ENCODE measurements at regions of chr7 and their contacts with region 1.

Region 1: DNA sequence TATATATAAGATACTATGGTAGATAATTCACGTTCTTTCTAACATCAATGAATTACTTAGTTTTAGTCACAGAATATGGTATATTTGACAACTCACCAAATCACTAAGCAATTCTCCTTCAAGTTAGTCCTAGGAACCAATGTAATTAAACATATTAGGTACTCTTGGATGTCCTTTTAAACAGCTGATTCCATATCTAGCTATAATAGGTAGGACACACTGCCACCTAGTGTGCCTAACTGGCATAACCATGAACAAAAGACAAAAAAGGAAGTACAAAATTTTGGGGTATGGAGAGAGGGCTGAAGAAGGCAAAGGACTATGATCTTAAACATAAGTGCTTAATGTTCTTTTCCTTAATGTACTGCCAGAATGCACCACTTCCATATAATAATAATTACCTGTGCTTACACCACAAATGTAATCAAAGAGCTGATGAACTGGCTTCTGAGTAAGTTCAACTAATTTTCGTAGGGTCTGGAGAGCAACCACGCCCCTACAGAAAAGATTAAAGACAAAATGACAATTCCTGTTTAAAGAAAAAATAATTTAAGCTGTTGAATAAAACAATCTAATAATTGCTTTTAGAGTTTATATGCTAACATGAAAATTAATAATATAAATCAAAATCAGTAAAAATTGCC is 28.7 kb downstream of the PNPLA8 start:
- DNase-seq: peak; percentile 59
- H3K4me3 Mint-ChIP-seq: no peak overlapping the region
- H3K27ac Mint-ChIP-seq: no peak overlapping the region
- H3K4me1 Mint-ChIP-seq: no peaks in the 10 kb centered on the region
- H3K27me3 Mint-ChIP-seq: no peaks in the 10 kb centered on the region

Region 2: GRCh38 chr7:108114117-108114841 is 382.9 kb before region 1 on chr7:
- CTCF ChIA-PET with region 1: interaction called, 4 read pairs
- intact Hi-C with region 1: loop called (anchors 5 kb)
- DNase-seq: peak; percentile 27
- H3K4me3 Mint-ChIP-seq: no peak overlapping the region
- H3K27ac Mint-ChIP-seq: no peak overlapping the region
- H3K4me1 Mint-ChIP-seq: no peaks in the 10 kb centered on the region
- H3K27me3 Mint-ChIP-seq: peaks cover 3% of the 10 kb centered on the region

Region 3: GRCh38 chr7:108181073-108181985 is 315.9 kb before region 1 on chr7:
- CTCF ChIA-PET with region 1: interaction called, 22 read pairs
- intact Hi-C with region 1: loop called (anchors 1 kb)
- DNase-seq: no peak
- H3K4me3 Mint-ChIP-seq: no peak overlapping the region
- H3K27ac Mint-ChIP-seq: no peak overlapping the region
- H3K4me1 Mint-ChIP-seq: no peaks in the 10 kb centered on the region
- H3K27me3 Mint-ChIP-seq: no peaks in the 10 kb centered on the region

Region 4: DNA sequence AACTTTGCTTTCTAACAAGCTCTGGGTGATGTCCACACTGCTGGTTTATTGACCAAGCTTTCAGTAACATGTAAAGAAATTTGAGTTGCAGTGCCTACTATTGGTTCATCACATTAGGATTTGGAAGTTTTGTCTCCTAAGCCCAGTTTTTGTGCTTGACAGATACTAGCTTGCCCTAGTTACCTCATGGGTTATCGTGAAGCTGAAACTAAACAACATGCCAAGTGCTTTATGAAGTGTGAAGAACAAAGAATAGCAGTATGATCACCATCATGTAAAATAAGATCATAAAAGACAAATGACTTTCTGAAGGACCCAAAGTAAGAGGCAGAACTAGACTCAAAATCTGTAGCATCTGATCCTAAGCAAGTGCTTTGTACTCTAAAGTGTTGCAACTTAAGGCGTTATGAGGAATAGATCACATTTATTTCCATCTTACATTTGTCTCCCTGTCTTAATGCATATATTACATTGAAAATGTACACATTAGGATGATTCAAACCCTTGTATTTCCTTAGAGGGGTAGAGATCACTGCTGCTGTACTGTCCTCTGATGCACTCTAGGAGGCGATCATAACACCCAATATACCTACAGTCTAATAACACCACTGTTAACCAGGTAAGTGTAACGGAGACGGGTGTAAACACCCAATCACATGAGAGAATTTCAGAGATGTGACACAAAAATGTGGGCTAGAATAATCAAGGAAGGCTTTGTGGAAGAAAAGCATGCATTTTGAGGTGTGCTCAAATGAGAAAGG is 112.3 kb before region 1 on chr7:
- CTCF ChIA-PET with region 1: interaction called, 3 read pairs
- intact Hi-C with region 1: loop called (anchors 1 kb)
- DNase-seq: no peak
- H3K4me3 Mint-ChIP-seq: no peak overlapping the region
- H3K27ac Mint-ChIP-seq: no peak overlapping the region
- H3K4me1 Mint-ChIP-seq: peaks cover 3% of the 10 kb centered on the region
- H3K27me3 Mint-ChIP-seq: no peaks in the 10 kb centered on the region

Region 5: DNA sequence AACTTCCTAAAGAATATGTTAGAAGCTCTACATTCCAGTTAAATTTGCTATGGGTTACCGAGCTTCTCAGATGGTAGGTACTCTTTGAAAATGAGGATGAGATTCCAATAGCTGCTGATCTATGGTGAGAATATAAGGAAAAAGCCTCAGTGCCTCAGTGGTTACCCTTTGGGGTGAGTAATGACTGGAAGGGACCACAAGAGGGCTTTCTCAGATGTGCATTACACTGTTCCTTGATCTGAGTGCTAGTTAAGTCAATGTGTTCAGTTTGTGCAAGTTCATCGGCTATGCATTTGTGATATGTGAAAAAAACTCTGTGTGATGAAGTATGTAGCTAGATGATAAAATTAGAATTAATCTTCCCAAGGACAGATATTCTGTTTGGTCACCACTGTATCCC is 44.5 kb before region 1 on chr7:
- CTCF ChIA-PET with region 1: interaction called, 18 read pairs
- intact Hi-C with region 1: loop called (anchors 1 kb)
- DNase-seq: no peak
- H3K4me3 Mint-ChIP-seq: no peak overlapping the region
- H3K27ac Mint-ChIP-seq: no peak overlapping the region
- H3K4me1 Mint-ChIP-seq: peaks cover 12% of the 10 kb centered on the region
- H3K27me3 Mint-ChIP-seq: peaks cover 33% of the 10 kb centered on the region

Region 6: GRCh38 chr7:108459931-108460551 is 37.2 kb before region 1 on chr7:
- CTCF ChIA-PET with region 1: interaction called, 4 read pairs
- intact Hi-C with region 1: loop called (anchors 1 kb)
- DNase-seq: peak; percentile 56
- H3K4me3 Mint-ChIP-seq: no peak overlapping the region
- H3K27ac Mint-ChIP-seq: no peak overlapping the region
- H3K4me1 Mint-ChIP-seq: peaks cover 30% of the 10 kb centered on the region
- H3K27me3 Mint-ChIP-seq: peaks cover 22% of the 10 kb centered on the region